Cardiac septum (tissue), 1 donor: ENCODE measurements at regions of chr5 and their contacts with region 1.

Region 1: GRCh38 chr5:151596828-151597539 is 5.9 kb upstream of the FAT2 start:
- DNase-seq: peak; percentile 60

Region 2: DNA sequence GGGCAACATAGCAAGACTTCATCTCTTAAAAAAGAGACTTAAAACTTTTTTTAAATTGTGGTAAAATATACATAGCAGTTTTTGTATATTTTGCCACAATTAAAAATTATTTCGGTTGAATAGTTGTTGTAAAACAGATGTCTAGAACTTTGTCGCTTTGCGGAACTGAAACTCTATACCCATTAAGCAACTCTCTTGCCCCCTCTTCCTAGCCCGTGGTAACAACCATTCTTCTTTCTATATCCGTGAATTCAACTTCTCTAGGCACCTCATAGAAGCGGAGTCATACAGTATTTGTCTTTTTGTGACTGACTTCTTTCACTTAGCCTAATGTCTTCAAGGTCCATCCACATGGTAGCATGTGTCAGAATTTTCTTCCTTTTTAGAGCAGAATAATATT is 46.4 kb after region 1 on chr5:
- intact Hi-C with region 1: loop called (anchors 5 kb)
- DNase-seq: no peak